Left ventricle myocardium inferior (tissue), 1 donor: ENCODE measurements at regions of chr9 and their contacts with region 1.

Region 1: DNA sequence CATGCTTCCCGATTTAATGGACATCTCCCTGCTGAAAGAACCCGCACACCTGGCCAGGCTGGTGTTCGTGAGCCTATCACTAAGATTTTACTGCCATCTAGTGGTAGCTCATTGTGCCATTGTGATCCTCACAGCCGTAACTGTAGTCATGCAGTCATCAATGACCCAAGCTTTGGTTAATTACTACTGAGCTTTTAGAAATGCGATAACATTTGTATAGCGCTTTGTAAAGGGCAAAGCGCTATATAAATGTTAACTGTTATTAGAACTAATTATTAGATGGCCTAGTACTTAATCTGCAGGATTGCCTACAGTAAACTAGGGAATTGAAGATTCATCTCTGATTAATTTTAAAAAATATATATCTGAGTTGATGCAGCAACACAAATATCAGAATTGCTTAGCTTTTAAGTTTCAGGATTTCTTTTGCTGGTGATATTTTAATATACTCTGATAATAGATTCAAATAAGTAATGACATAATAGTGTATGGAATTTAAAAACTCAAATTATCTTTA is 90.2 kb downstream of the HACD4 start:
- DNase-seq: peak; percentile 20
- H3K4me3 ChIP-seq: no peak overlapping the region
- H3K27ac ChIP-seq: no peak overlapping the region
- H3K4me1 ChIP-seq: no peaks in the 10 kb centered on the region
- H3K27me3 ChIP-seq: no peaks in the 10 kb centered on the region
- CTCF ChIP-seq: peak; percentile 89

Region 2: DNA sequence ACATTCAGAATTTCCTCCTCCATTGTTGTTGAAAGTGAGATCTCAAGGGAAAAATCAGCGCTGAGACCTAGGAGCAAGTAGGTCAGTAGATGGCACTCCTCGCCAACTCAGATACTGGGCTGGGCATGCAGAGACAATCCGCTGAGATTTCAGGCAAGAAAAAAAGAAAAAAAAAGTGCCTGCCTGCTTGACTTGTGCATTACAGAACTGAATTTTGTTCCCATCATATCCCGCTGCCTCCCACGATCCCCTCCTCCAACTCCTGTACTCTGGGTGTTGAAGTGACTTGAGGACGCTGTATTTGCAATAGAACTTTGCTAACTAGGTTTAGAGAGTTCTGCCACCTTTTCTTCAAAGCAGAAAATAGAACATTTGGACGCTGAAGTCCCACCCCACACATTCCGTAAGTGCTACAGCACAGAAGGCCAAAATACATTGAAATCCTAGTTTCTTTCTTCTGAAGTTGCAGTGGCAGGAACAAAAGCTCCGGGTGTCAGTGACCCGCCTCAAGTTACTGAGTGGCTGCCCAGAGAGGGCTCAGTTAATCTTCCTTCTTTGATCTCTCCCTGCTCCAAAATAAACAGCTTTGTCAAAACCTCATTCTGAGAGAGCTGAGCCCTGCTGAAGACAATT is 584.7 kb before region 1 on chr9:
- intact Hi-C with region 1: loop called (anchors 5 kb)
- DNase-seq: peak; percentile 35
- H3K4me3 ChIP-seq: peak overlapping the region; percentile 45
- H3K27ac ChIP-seq: peak overlapping the region; percentile 74
- H3K4me1 ChIP-seq: peaks cover 31% of the 10 kb centered on the region
- H3K27me3 ChIP-seq: no peaks in the 10 kb centered on the region
- CTCF ChIP-seq: peak; percentile 82

Region 3: GRCh38 chr9:20622330-20623020 is 318.8 kb before region 1 on chr9 and contains the start of gene MLLT3:
- intact Hi-C with region 1: loop called (anchors 10 kb)
- DNase-seq: peak; percentile 97
- H3K4me3 ChIP-seq: peak within 1 kb of the TSS; percentile 95
- H3K27ac ChIP-seq: peak within 1 kb of the TSS; percentile 95
- H3K4me1 ChIP-seq: peaks cover 63% of the 10 kb centered on the region
- H3K27me3 ChIP-seq: no peaks in the 10 kb centered on the region
- CTCF ChIP-seq: no peak
- total RNA-seq, gene MLLT3: 17.5 TPM

Region 4: GRCh38 chr9:21110708-21111576 is 169.7 kb after region 1 on chr9:
- intact Hi-C with region 1: no loop called
- DNase-seq: no peak
- H3K4me3 ChIP-seq: no peak overlapping the region
- H3K27ac ChIP-seq: no peak overlapping the region
- H3K4me1 ChIP-seq: no peaks in the 10 kb centered on the region
- H3K27me3 ChIP-seq: no peaks in the 10 kb centered on the region
- CTCF ChIP-seq: peak; percentile 89